CD4-positive, alpha-beta memory T cell (primary cell): ENCODE measurements at regions of chr3 and their contacts with region 1.

Region 1: DNA sequence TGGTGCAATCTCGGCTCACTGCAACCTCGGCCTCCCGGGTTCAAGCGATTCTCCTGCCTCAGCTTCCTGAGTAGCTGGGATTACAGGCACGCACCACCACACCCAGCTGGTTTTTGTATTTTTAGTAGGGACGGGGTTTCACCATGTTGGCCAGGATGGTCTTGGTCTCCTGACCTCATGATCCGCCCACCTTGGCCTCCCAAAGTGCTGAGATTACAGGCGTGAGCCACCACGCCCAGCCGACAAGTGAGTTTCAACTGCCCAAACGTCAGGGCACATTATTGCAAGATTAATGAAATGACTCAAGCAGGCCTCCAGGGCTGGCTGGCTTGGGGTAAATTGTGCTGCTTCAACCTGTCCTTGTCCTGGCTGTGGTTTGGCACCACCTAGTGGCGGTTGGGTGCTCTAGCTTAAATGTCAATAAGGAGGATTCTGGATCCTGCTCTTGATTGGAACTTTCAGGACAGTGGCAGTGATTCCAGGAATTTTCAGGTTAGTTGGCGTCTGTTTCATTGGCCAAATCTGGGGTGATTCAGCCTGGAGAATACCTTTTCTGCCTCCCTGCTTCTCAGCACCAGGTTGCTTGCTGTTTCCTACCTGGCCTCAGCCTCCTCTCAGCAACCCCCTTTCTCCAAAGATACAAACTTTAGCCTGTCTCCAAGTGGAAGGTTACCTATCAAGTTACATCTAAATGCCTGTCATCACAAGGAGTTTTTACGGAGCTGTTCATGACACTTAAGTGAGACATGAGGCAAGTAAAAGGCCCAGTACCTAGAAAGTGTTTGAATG is 32.4 kb upstream of the SACM1L start:
- DNase-seq: peak; percentile 78 to 87 (median 80)
- H3K4me3 ChIP-seq: no peak overlapping the region
- H3K4me3 Mint-ChIP-seq: no peak overlapping the region
- H3K27ac ChIP-seq: no peak overlapping the region
- H3K27ac Mint-ChIP-seq: peak overlapping the region in 2 of 7 donors; percentile 23 to 61
- H3K4me1 ChIP-seq: peaks cover 6% of the 10 kb centered on the region
- H3K4me1 Mint-ChIP-seq: peaks cover 13 to 23% (median 16%) of the 10 kb centered on the region in 4 donors
- H3K27me3 ChIP-seq: no peaks in the 10 kb centered on the region
- H3K27me3 Mint-ChIP-seq: no peaks in the 10 kb centered on the region

Region 2: GRCh38 chr3:45210308-45211041 is 446.3 kb before region 1 on chr3:
- CTCF ChIA-PET with region 1: interaction called, 4 read pairs
- POLR2A ChIA-PET with region 1: no interaction called
- intact Hi-C with region 1: loop called (anchors 5 kb)
- DNase-seq: peak; percentile 73 to 82 (median 76)
- H3K4me3 ChIP-seq: no peak overlapping the region
- H3K4me3 Mint-ChIP-seq: peak overlapping the region in 2 of 8 donors; percentile 21 to 29
- H3K27ac ChIP-seq: no peak overlapping the region
- H3K27ac Mint-ChIP-seq: peak overlapping the region in 2 of 7 donors; percentile 6 to 77
- H3K4me1 ChIP-seq: peaks cover 22% of the 10 kb centered on the region
- H3K4me1 Mint-ChIP-seq: peaks cover 9 to 28% (median 20%) of the 10 kb centered on the region in 4 donors
- H3K27me3 ChIP-seq: peaks cover 5% of the 10 kb centered on the region
- H3K27me3 Mint-ChIP-seq: peaks cover 0 to 9% of the 10 kb centered on the region in 2 donors

Region 3: GRCh38 chr3:45579251-45579650 is 77.5 kb before region 1 on chr3:
- CTCF ChIA-PET with region 1: interaction called, 10 read pairs
- POLR2A ChIA-PET with region 1: no interaction called
- intact Hi-C with region 1: no loop called
- DNase-seq: no peak
- H3K4me3 ChIP-seq: no peak overlapping the region
- H3K4me3 Mint-ChIP-seq: no peak overlapping the region
- H3K27ac ChIP-seq: no peak overlapping the region
- H3K27ac Mint-ChIP-seq: no peak overlapping the region
- H3K4me1 ChIP-seq: no peaks in the 10 kb centered on the region
- H3K4me1 Mint-ChIP-seq: no peaks in the 10 kb centered on the region
- H3K27me3 ChIP-seq: no peaks in the 10 kb centered on the region
- H3K27me3 Mint-ChIP-seq: peaks cover 0 to 2% of the 10 kb centered on the region in 2 donors

Region 4: GRCh38 chr3:45632956-45633355 is 23.8 kb before region 1 on chr3:
- CTCF ChIA-PET with region 1: interaction called, 17 read pairs
- POLR2A ChIA-PET with region 1: interaction called, 3 read pairs
- intact Hi-C with region 1: no loop called
- DNase-seq: no peak
- H3K4me3 ChIP-seq: no peak overlapping the region
- H3K4me3 Mint-ChIP-seq: no peak overlapping the region
- H3K27ac ChIP-seq: no peak overlapping the region
- H3K27ac Mint-ChIP-seq: peak overlapping the region in 4 of 7 donors; percentile 2 to 63 (median 51)
- H3K4me1 ChIP-seq: peaks cover 6% of the 10 kb centered on the region
- H3K4me1 Mint-ChIP-seq: peaks cover 13 to 41% (median 21%) of the 10 kb centered on the region in 4 donors
- H3K27me3 ChIP-seq: no peaks in the 10 kb centered on the region
- H3K27me3 Mint-ChIP-seq: no peaks in the 10 kb centered on the region

Region 5: DNA sequence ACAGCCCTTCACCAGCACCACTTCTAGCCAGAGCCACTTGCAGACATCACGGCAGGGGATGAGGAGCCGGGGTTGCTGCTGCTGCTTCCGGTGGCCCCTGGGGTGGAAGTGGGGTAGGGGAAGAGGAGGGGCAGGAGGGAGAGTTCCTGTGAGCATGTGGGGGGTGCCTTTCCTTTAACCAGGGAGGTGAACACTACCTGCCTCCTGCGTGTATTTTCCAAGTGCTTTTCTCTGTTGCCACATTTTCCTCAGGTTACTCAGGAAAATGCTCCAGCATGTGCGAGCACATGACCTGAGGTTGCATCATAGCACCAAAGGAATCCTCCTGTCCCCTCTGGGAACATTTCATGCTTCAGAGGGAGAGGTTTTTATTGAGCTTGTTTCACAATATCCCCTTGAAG is 20.3 kb after region 1 on chr3:
- CTCF ChIA-PET with region 1: interaction called, 29 read pairs
- POLR2A ChIA-PET with region 1: interaction called, 4 read pairs
- intact Hi-C with region 1: no loop called
- DNase-seq: peak; percentile 62 to 79 (median 69)
- H3K4me3 ChIP-seq: peak overlapping the region in 1 of 2 donors; percentile 20
- H3K4me3 Mint-ChIP-seq: peak overlapping the region; percentile 38 to 85 (median 80)
- H3K27ac ChIP-seq: peak overlapping the region; percentile 57
- H3K27ac Mint-ChIP-seq: peak overlapping the region; percentile 92 to 97 (median 94)
- H3K4me1 ChIP-seq: peaks cover 27% of the 10 kb centered on the region
- H3K4me1 Mint-ChIP-seq: peaks cover 12 to 26% (median 17%) of the 10 kb centered on the region in 4 donors
- H3K27me3 ChIP-seq: no peaks in the 10 kb centered on the region
- H3K27me3 Mint-ChIP-seq: no peaks in the 10 kb centered on the region

Region 6: DNA sequence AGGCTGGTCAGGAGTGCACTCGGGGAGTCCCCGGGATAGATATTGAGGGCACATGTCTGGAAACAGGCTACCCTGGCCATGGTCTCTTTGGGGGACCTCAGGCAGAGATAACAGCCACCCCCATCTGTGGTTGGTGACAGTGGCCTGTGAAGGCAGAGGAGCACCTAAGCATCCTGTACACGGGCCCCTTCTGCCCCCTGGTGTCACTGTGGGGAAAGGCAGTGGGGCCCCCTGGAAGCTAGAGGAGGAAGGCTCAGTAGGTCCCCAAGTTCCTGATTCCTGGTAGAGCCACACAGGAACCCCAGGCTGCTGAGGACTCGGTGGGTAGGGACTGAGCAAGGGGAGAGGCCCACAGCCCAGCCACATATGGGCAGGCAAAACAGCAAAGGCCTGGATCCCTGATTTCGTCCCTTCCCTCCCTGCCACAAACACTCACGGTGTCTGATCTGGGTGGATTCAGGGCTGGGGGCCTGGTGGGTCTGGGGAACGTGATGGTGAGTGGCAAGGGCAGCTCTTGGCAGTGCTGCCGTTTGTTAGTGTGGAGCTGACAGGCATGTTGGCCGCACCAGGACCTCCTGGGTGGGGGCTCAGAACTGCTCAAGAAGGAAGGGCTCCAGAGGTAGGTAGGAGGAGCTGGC is 272.4 kb after region 1 on chr3:
- CTCF ChIA-PET with region 1: interaction called, 10 read pairs
- POLR2A ChIA-PET with region 1: no interaction called
- intact Hi-C with region 1: no loop called
- DNase-seq: peak; percentile 55 to 64 (median 56)
- H3K4me3 ChIP-seq: no peak overlapping the region
- H3K4me3 Mint-ChIP-seq: no peak overlapping the region
- H3K27ac ChIP-seq: no peak overlapping the region
- H3K27ac Mint-ChIP-seq: peak overlapping the region in 3 of 7 donors; percentile 22 to 68 (median 53)
- H3K4me1 ChIP-seq: no peaks in the 10 kb centered on the region
- H3K4me1 Mint-ChIP-seq: peaks cover 5 to 23% (median 9%) of the 10 kb centered on the region in 4 donors
- H3K27me3 ChIP-seq: no peaks in the 10 kb centered on the region
- H3K27me3 Mint-ChIP-seq: no peaks in the 10 kb centered on the region

Region 7: GRCh38 chr3:45995236-45996192 is 338.7 kb after region 1 on chr3 and contains the start of gene FYCO1:
- CTCF ChIA-PET with region 1: no interaction called
- POLR2A ChIA-PET with region 1: no interaction called
- intact Hi-C with region 1: no loop called
- DNase-seq: peak; percentile 84 to 88 (median 85)
- H3K4me3 ChIP-seq: peak within 1 kb of the TSS; percentile 75 to 93
- H3K4me3 Mint-ChIP-seq: peak within 1 kb of the TSS; percentile 83 to 95 (median 92)
- H3K27ac ChIP-seq: peak within 1 kb of the TSS; percentile 95
- H3K27ac Mint-ChIP-seq: peak within 1 kb of the TSS; percentile 88 to 95 (median 94)
- H3K4me1 ChIP-seq: peaks cover 47% of the 10 kb centered on the region
- H3K4me1 Mint-ChIP-seq: peaks cover 32 to 59% (median 37%) of the 10 kb centered on the region in 4 donors
- H3K27me3 ChIP-seq: no peaks in the 10 kb centered on the region
- H3K27me3 Mint-ChIP-seq: no peaks in the 10 kb centered on the region
- total RNA-seq, gene FYCO1: 42.5 to 43.3 TPM